MCF 10A (cell line): ENCODE measurements at regions of chr1 and their contacts with region 1.

Region 1: DNA sequence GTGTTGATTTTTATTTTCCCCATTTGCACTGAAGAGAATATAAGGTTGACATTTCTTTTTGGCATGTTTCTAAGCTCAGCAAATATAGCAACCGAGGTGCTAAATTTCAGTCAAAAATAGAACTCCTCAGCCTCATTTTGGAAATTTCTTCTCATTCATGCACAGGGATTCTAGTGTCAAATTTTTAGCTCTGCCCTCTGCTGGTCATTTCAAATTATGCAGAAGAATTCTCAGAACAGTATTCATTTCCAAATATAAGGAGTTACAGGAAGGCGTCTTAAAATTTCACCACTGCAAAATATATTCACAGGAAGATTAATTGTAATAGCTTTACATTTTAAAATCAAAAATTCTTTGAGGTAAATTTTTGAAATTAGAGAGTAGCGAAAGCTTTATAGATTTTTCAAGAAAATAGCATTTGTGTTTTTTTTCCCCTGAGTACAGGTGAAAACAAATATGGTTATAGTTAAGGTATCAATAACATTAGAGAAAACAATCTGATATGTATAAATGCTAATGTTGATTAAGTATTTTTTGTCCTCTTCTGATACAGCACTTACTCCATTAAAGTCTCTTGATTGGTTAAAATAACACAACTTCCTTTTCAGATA is 57.9 kb downstream of the FMN2 start:
- DNase-seq: peak; percentile 75
- H3K4me3 Mint-ChIP-seq: no peak overlapping the region
- H3K27ac Mint-ChIP-seq: no peak overlapping the region
- H3K4me1 Mint-ChIP-seq: no peaks in the 10 kb centered on the region
- H3K27me3 Mint-ChIP-seq: peaks cover 13% of the 10 kb centered on the region
- CTCF ChIP-seq: peak; percentile 86

Region 2: DNA sequence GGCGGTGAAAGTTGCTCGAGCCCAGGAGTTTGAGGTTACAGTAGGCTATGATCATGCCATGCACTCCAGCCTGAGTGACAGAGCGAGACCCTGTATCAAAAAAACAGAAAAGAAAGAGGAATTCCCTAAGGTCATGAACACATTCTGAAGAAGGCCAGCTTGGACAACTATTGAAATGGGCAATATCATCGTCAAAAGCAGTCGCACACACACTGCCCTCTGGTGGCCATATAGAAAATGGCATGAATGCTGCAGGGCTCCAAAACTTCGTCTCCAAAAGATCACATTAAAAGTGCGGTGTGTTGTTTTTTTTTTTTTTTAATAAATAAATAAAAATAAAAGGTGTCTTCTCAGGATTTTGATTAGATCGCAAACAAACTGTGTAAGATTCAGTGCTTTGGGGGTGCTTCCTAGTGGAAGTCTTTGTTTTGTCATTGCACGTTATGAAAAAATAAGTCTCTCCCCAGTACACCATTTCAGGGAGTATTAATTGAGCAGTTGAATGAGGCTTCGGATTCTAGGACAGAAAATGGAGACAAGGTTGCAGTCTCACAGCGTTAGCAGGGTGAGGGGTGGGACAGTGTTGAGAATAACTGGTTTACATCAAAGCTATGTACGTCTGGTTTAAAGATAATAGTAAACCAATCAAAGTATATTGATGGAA is 145.4 kb before region 1 on chr1:
- CTCF ChIA-PET with region 1: interaction called, 15 read pairs
- POLR2A ChIA-PET with region 1: no interaction called
- intact Hi-C with region 1: no loop called
- DNase-seq: peak; percentile 69
- H3K4me3 Mint-ChIP-seq: no peak overlapping the region
- H3K27ac Mint-ChIP-seq: no peak overlapping the region
- H3K4me1 Mint-ChIP-seq: peaks cover 9% of the 10 kb centered on the region
- H3K27me3 Mint-ChIP-seq: no peaks in the 10 kb centered on the region
- CTCF ChIP-seq: peak; percentile 96

Region 3: GRCh38 chr1:240027059-240027462 is 122.5 kb before region 1 on chr1:
- CTCF ChIA-PET with region 1: interaction called, 198 read pairs
- POLR2A ChIA-PET with region 1: interaction called, 5 read pairs
- intact Hi-C with region 1: loop called (anchors 1 kb)
- DNase-seq: peak; percentile 81
- H3K4me3 Mint-ChIP-seq: no peak overlapping the region
- H3K27ac Mint-ChIP-seq: no peak overlapping the region
- H3K4me1 Mint-ChIP-seq: peaks cover 13% of the 10 kb centered on the region
- H3K27me3 Mint-ChIP-seq: no peaks in the 10 kb centered on the region
- CTCF ChIP-seq: peak; percentile 100

Region 4: GRCh38 chr1:240070188-240070587 is 79.4 kb before region 1 on chr1:
- CTCF ChIA-PET with region 1: interaction called, 10 read pairs
- POLR2A ChIA-PET with region 1: no interaction called
- intact Hi-C with region 1: no loop called
- DNase-seq: no peak
- H3K4me3 Mint-ChIP-seq: no peak overlapping the region
- H3K27ac Mint-ChIP-seq: no peak overlapping the region
- H3K4me1 Mint-ChIP-seq: no peaks in the 10 kb centered on the region
- H3K27me3 Mint-ChIP-seq: no peaks in the 10 kb centered on the region
- CTCF ChIP-seq: no peak

Region 5: GRCh38 chr1:240136402-240136801 is 13.2 kb before region 1 on chr1:
- CTCF ChIA-PET with region 1: interaction called, 172 read pairs
- POLR2A ChIA-PET with region 1: interaction called, 4 read pairs
- intact Hi-C with region 1: no loop called
- DNase-seq: peak; percentile 24
- H3K4me3 Mint-ChIP-seq: no peak overlapping the region
- H3K27ac Mint-ChIP-seq: no peak overlapping the region
- H3K4me1 Mint-ChIP-seq: no peaks in the 10 kb centered on the region
- H3K27me3 Mint-ChIP-seq: no peaks in the 10 kb centered on the region
- CTCF ChIP-seq: no peak

Region 6: DNA sequence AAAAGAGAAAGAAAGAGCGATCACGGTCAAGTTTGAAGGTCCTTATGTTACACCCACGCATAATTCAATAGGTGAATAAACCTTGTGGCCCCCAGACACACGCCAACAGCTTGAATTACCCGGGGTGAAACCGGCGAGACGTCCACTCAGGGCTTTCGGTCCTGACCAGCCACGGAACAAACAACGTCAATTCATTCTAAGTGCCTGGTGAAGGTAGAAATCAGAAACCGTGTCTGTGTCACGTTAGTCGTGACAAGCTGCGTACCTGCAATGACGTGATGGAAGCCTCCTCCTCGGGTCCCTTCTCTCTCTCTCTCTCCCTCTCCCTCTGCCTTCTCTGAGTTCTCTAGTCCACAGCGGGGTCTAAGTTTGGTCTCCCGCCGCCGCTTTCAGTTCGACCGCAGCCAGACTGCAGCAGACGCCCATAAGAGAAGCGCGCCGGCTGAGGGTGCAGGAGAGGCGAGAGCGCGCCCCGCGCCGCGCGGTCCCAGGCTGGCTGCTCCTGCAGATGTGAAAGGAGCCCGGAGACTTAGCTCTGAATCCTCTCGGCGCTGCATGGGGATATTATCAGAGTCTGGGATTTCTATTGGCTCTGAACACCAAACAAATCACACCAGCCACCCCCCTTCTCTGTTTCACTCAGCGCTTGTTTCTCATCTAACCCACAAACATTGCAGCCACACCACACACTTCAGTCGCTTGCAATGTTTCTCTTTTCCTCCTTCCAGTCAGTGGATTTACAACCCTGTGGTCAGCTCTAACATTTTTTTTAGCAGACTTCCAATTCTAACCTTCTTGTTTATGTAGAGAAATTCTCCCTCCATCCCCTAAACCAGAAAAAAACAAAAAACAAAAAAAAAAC is 462.3 kb after region 1 on chr1 and contains the start of gene GREM2:
- CTCF ChIA-PET with region 1: interaction called, 12 read pairs
- POLR2A ChIA-PET with region 1: no interaction called
- intact Hi-C with region 1: no loop called
- DNase-seq: peak; percentile 72
- H3K4me3 Mint-ChIP-seq: peak within 1 kb of the TSS; percentile 86
- H3K27ac Mint-ChIP-seq: peak within 1 kb of the TSS; percentile 59
- H3K4me1 Mint-ChIP-seq: peaks cover 15% of the 10 kb centered on the region
- H3K27me3 Mint-ChIP-seq: no peaks in the 10 kb centered on the region
- CTCF ChIP-seq: no peak
- total RNA-seq, gene GREM2: 0.10 TPM in 1 of 2 replicates, not detected in the other

Region 7: GRCh38 chr1:240691521-240692338 is 542.1 kb after region 1 on chr1:
- CTCF ChIA-PET with region 1: interaction called, 25 read pairs
- POLR2A ChIA-PET with region 1: no interaction called
- intact Hi-C with region 1: no loop called
- DNase-seq: peak; percentile 71
- H3K4me3 Mint-ChIP-seq: no peak overlapping the region
- H3K27ac Mint-ChIP-seq: no peak overlapping the region
- H3K4me1 Mint-ChIP-seq: no peaks in the 10 kb centered on the region
- H3K27me3 Mint-ChIP-seq: no peaks in the 10 kb centered on the region
- CTCF ChIP-seq: peak; percentile 98

Region 8: GRCh38 chr1:241202401-241202800 is 1052.8 kb after region 1 on chr1:
- CTCF ChIA-PET with region 1: no interaction called
- POLR2A ChIA-PET with region 1: no interaction called
- intact Hi-C with region 1: no loop called
- DNase-seq: no peak
- H3K4me3 Mint-ChIP-seq: no peak overlapping the region
- H3K27ac Mint-ChIP-seq: no peak overlapping the region
- H3K4me1 Mint-ChIP-seq: no peaks in the 10 kb centered on the region
- H3K27me3 Mint-ChIP-seq: no peaks in the 10 kb centered on the region
- CTCF ChIP-seq: no peak